Endothelial cell of umbilical vein (primary cell): ENCODE measurements at regions of chr17 and their contacts with region 1.

Region 1: GRCh38 chr17:4420692-4421131 is 13.0 kb upstream of the SPNS3 start:
- DNase-seq: peak; percentile 70
- H3K4me3 ChIP-seq: no peak overlapping the region
- H3K27ac ChIP-seq: no peak overlapping the region
- H3K4me1 ChIP-seq: no peaks in the 10 kb centered on the region
- H3K27me3 ChIP-seq: no peaks in the 10 kb centered on the region
- CTCF ChIP-seq: peak; percentile 81 to 82
- POLR2A ChIP-seq: no peak

Region 2: DNA sequence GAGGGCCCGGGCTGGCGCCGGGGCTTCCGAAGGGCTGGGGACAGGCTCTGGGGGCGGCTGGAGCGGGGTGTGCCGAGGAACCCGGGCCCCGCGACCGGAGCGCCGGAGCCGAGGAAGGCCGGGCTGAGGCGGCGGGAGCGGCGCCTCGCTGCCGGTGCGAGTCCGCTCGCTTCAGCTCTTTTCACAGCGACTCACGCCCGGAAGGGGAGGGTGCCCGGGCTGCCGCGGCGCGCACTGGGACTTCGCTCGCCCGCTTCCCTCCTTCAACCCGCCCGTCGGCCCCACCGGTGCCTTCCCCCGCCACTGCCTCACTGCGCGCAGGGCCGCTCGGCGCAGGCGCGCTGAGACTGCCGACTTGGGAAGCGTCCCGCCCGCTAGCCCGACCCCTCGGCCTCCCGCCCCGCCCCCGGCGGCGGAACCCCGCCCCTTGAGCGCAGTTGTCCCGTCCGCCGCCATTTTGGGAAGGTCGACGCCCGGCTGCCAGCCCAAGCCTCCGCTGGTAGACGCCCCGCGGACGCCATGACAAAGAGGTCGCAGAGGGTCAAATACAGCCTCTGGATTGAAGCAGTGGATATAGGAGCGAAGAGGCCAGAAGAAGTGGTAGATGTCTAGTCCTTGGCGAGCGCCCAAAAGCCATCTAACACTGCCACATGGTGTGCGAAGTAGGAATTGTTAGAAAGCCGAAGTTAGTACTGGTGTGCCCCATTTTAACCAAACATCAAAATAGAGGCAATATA is 54.2 kb before region 1 on chr17 and contains the start of gene UBE2G1:
- CTCF ChIA-PET with region 1: no interaction called
- POLR2A ChIA-PET with region 1: no interaction called
- dilution Hi-C with region 1: no loop called
- intact Hi-C with region 1: no loop called
- DNase-seq: peak; percentile 98
- H3K4me3 ChIP-seq: peak within 1 kb of the TSS; percentile 61 to 94 (median 88)
- H3K27ac ChIP-seq: peak within 1 kb of the TSS; percentile 65
- H3K4me1 ChIP-seq: peaks cover 4% of the 10 kb centered on the region
- H3K27me3 ChIP-seq: no peaks in the 10 kb centered on the region
- CTCF ChIP-seq: peak in 1 of 2 donors; percentile 9
- POLR2A ChIP-seq: peak; percentile 52
- total RNA-seq, gene UBE2G1: 77.2 and 79.6 TPM in 2 replicates

Region 3: DNA sequence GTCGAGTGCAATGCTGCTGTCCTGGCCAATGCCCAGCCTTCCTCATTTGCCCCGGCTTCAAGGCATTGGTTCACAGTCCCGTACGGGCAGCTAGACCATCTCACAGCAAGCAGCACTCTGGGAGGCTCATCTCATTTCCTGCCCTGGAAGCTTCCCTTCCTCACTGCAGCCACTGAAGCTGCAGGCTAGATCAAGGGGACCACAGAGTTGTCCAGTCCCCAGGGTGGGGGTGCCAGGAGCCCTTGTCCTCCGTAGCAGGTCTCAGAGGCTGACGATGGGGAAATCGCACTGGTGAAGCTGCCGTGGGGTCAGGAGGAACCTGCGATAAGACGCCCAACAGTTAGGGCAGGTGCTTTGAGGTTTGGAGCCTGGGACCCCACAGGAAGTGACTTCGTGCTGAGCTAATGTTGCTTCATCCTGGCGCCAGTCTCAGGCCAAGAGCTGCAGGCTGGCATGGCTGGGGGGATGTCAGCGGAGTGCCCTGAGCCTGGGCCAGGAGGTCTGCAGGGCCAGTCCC is 12.9 kb after region 1 on chr17 and contains the start of gene SPNS3:
- CTCF ChIA-PET with region 1: interaction called, 10 read pairs
- POLR2A ChIA-PET with region 1: no interaction called
- dilution Hi-C with region 1: no loop called
- intact Hi-C with region 1: no loop called
- DNase-seq: no peak
- H3K4me3 ChIP-seq: no peak within 1 kb of the TSS
- H3K27ac ChIP-seq: no peak within 1 kb of the TSS
- H3K4me1 ChIP-seq: peaks cover 18% of the 10 kb centered on the region
- H3K27me3 ChIP-seq: no peaks in the 10 kb centered on the region
- CTCF ChIP-seq: no peak
- POLR2A ChIP-seq: no peak
- total RNA-seq, gene SPNS3: 0.66 TPM in 1 of 2 replicates, not detected in the other

Region 4: GRCh38 chr17:4498461-4499397 is 78.0 kb after region 1 on chr17 and contains the start of gene SPNS2:
- CTCF ChIA-PET with region 1: interaction called, 18 read pairs
- POLR2A ChIA-PET with region 1: no interaction called
- dilution Hi-C with region 1: no loop called
- intact Hi-C with region 1: loop called (anchors 1 kb)
- DNase-seq: peak; percentile 64
- H3K4me3 ChIP-seq: peak within 1 kb of the TSS; percentile 19 to 84 (median 50)
- H3K27ac ChIP-seq: peak within 1 kb of the TSS; percentile 12
- H3K4me1 ChIP-seq: peaks cover 22% of the 10 kb centered on the region
- H3K27me3 ChIP-seq: no peaks in the 10 kb centered on the region
- CTCF ChIP-seq: no peak
- POLR2A ChIP-seq: peak; percentile 52
- total RNA-seq, gene SPNS2: 56.6 and 77.3 TPM in 2 replicates

Region 5: DNA sequence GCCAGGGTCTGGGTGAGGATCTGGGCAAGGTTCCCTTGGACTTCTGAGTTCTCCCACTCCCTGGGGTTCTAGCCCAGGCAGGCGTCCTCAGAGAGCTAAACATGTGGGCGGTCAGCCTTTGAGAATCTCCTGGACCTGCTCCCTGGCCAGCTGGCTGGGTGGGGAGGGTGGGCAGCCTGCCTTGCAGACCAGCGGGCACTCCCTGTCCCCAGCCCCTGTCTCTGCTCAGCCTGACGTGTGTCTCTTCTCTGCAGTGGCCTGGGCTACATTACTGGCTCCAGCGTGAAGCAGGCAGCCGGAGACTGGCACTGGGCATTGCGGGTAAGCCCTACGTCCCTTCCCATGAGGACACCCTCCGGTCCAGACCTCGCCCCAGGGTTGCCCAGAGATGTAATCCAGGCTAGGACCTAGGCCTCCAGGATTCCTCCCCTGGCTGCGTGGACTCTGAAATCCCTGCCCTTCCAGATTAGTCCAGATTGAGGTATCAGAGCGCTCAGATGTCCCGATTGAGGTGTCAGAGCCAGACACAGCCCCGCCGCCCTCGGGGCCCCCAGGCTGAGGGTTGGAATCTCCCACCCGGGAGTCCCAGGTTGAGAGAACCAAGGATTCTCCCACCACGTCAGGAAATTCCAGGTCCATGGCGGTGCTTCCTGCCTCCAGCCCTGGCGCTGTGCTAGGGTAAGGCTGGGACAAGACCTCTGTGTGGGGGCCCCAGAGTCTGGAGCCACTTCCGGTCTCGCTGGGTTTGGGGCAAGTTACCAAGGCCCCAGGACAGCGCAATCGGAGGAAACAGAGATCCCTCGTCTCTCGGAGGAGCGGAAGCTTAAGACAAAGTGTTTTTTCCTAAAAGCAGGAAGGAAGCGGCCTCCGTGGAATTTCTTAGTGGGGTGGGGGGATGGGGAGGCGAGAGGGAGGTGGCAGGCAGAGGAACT is 110.4 kb after region 1 on chr17:
- CTCF ChIA-PET with region 1: interaction called, 7 read pairs
- POLR2A ChIA-PET with region 1: no interaction called
- dilution Hi-C with region 1: no loop called
- intact Hi-C with region 1: loop called (anchors 2 kb)
- DNase-seq: peak; percentile 97
- H3K4me3 ChIP-seq: no peak overlapping the region
- H3K27ac ChIP-seq: peak overlapping the region; percentile 89
- H3K4me1 ChIP-seq: peaks cover 57% of the 10 kb centered on the region
- H3K27me3 ChIP-seq: no peaks in the 10 kb centered on the region
- CTCF ChIP-seq: no peak
- POLR2A ChIP-seq: peak; percentile 63

Region 6: DNA sequence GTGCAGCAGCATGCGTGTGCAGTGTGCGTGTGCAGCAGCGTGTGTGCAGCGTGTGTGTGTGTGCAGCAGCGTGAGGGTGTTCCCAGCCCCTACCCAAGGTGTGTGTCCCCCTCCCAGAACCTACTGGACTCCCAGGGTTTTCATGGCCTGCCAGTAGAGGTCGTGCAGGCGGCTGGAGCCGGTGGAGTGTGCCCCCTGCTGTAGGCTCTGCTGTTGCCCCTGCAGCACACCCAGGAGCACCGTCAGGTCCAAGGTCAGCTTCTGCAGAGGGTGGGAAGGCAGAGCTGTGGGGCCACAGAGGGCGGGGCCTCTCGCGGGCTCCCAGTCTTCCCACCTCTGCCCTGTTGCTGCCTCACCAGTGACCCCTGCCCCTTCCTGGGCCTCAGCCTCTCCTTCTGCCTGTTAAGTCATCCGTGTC is 119.5 kb after region 1 on chr17:
- CTCF ChIA-PET with region 1: interaction called, 28 read pairs
- POLR2A ChIA-PET with region 1: no interaction called
- dilution Hi-C with region 1: no loop called
- intact Hi-C with region 1: loop called (anchors 1 kb)
- DNase-seq: no peak
- H3K4me3 ChIP-seq: no peak overlapping the region
- H3K27ac ChIP-seq: no peak overlapping the region
- H3K4me1 ChIP-seq: peaks cover 43% of the 10 kb centered on the region
- H3K27me3 ChIP-seq: no peaks in the 10 kb centered on the region
- CTCF ChIP-seq: peak; percentile 48 to 72
- POLR2A ChIP-seq: no peak

Region 7: GRCh38 chr17:4625181-4625617 is 204.5 kb after region 1 on chr17:
- CTCF ChIA-PET with region 1: interaction called, 26 read pairs
- POLR2A ChIA-PET with region 1: no interaction called
- dilution Hi-C with region 1: no loop called
- intact Hi-C with region 1: loop called (anchors 1 kb)
- DNase-seq: no peak
- H3K4me3 ChIP-seq: no peak overlapping the region
- H3K27ac ChIP-seq: no peak overlapping the region
- H3K4me1 ChIP-seq: no peaks in the 10 kb centered on the region
- H3K27me3 ChIP-seq: peaks cover 12 to 16% of the 10 kb centered on the region in 2 experiments
- CTCF ChIP-seq: no peak
- POLR2A ChIP-seq: no peak